ENCODE measurements at regions of chr1 and their contacts with region 1.

Region 1: DNA sequence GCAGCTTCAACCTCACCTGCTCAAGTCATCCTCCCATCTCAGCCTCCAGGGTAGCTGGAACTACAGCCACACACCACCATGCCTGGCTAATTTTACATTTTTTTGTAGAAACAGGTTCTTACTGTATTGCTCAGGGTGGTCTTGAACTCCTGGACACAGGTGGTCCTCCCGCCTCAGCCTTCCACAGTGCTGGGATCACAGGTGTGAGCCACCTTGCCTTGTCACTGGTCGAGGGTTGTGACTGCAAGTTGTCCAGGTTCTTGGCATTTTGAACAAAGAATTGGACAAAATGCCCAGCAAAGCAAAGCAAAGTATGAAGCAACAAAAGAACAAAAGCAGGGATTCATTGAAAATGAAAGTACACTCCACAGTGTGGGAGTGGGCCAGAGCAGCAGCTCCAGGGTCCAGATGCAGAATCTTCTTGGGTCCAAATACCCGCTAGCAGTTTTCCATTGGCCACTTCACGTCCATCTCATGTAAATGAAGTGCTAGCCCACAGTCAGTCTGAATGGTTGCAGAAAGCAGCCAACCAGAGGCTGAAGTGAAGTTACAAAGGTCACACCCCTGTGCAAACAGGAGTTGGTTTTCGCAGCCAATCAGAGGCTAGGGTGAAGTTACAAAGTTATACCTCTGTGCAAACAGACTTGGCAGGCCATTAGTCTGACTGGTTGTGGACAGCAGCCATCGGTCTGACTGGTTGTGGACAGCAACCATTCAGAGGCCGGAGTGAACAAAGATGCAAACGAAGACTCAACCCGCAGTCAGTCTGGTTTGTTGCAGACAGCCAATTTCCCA is 109.5 kb upstream of the KIF26B start:
- DNase-seq: no peak
- H3K4me3 ChIP-seq: no peak overlapping the region
- CTCF ChIP-seq: no peak

Region 2: GRCh38 chr1:244536316-244536715 is 509.0 kb before region 1 on chr1:
- CTCF ChIA-PET with region 1: no interaction called
- POLR2A ChIA-PET with region 1: no interaction called
- DNase-seq: no peak
- H3K4me3 ChIP-seq: no peak overlapping the region
- CTCF ChIP-seq: no peak

Region 3: GRCh38 chr1:244796718-244797406 is 248.4 kb before region 1 on chr1:
- CTCF ChIA-PET with region 1: interaction called, 35 read pairs
- POLR2A ChIA-PET with region 1: no interaction called
- DNase-seq: no peak
- H3K4me3 ChIP-seq: no peak overlapping the region
- CTCF ChIP-seq: peak; percentile 72

Region 4: DNA sequence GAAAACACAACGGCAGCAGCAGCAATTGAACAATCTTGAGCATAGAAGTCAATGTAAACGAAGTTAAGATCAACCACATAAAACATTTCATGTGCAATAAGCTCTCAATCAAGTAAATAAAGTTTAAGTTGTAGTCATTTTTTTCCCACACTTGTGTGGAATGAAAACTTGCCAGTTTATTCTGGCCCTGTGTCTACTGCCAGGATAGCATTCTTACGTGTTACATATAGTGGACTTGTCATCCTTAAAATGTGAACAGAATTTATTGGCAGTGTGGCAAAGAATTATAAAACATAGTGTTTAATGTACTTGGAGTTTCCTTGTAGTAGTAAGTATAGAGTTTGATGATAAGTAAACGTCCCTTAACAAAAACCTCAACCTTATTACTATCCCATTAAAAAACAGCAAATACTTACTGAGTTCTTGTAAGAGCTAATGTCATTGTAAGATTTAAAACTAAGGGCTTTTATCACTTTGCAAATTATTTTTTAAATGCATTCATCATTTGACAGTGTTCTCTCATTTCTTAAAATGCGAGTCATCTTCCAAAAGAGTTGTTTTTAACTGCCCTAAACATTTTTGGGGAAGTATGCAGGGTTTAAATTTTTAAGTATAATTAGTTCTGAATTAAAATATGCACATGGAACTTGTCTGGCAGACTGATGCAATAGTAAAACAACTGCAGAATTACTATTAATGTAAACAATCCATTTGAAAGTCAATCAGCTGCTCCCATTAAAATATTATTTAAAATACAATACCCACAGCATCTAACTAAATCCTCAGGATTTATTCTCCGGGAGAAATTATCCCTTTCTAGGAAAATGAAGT is 201.9 kb before region 1 on chr1:
- CTCF ChIA-PET with region 1: interaction called, 18 read pairs
- POLR2A ChIA-PET with region 1: no interaction called
- DNase-seq: no peak
- H3K4me3 ChIP-seq: no peak overlapping the region
- CTCF ChIP-seq: no peak

Region 5: DNA sequence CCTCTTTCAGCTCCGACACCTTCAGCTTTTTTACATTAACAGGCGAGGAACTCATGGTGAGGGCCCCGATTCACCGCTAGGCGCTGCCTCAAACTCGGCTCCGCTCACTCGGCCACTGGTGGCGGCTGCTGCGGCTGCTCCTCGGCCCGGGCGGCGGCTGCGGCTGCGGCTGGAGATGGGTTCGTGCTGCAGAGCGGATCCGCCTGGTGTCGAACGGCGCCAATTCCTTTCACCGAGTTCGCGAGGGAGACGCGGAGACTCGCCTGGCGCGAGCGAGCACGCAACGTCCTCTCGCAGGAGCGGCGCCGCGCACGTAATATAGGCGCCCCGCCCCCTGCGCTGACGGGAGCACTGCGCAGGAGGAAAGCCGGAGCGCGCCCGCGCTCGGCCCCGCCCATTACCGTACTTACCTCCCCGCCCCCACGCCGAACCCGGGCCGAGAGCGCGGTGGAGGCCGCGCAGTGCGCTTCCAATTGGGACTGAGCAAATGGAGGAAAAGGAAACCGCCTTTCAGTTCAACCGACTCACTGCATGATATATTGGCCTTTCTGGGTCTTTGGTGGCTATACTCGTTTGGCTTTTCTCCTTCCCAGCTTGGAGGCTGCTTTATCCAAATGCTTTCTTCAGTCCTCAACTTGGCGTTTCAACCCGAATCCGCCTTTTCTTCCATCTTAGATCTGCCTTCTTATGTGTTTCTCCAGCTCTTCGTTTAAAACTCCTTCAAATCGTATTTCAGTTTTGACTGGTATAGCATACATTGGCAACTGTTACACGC is 180.8 kb before region 1 on chr1 and contains the start of gene HNRNPU:
- CTCF ChIA-PET with region 1: interaction called, 35 read pairs
- POLR2A ChIA-PET with region 1: no interaction called
- DNase-seq: peak; percentile 73
- H3K4me3 ChIP-seq: peak within 1 kb of the TSS; percentile 95
- CTCF ChIP-seq: peak; percentile 30

Region 6: DNA sequence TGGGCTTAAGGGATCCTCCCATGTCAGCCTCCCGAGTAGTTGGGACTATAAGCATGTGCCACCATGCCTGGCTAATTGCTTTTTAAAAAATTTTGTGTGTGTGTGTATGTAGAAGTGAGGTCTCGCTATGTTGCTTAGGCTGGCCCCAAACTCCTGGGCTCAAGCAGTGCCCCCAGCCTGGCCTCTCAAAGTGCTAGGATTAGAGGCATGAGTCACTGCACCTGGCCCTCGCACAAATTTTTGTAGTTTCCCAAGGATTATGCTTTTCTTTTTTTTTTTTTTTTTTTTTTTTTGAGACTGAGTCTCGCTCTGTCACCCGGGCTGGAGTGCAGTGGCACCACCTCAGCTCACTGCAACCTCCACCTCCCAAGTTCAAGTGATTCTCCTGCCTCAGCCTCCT is 36.5 kb before region 1 on chr1:
- CTCF ChIA-PET with region 1: interaction called, 19 read pairs
- POLR2A ChIA-PET with region 1: no interaction called
- DNase-seq: no peak
- H3K4me3 ChIP-seq: no peak overlapping the region
- CTCF ChIP-seq: no peak

Region 7: GRCh38 chr1:245019910-245020486 is 25.3 kb before region 1 on chr1:
- CTCF ChIA-PET with region 1: interaction called, 28 read pairs
- POLR2A ChIA-PET with region 1: no interaction called
- DNase-seq: no peak
- H3K4me3 ChIP-seq: no peak overlapping the region
- CTCF ChIP-seq: no peak

Region 8: GRCh38 chr1:245060684-245061374 is 15.5 kb after region 1 on chr1:
- CTCF ChIA-PET with region 1: interaction called, 89 read pairs
- POLR2A ChIA-PET with region 1: no interaction called
- DNase-seq: no peak
- H3K4me3 ChIP-seq: no peak overlapping the region
- CTCF ChIP-seq: no peak